Endothelial cell of umbilical vein (primary cell): ENCODE measurements at regions of chr1 and their contacts with region 1.

Region 1: GRCh38 chr1:184242507-184242943 is 144.3 kb upstream of the C1orf21 start:
- DNase-seq: peak; percentile 69
- H3K4me3 ChIP-seq: no peak overlapping the region
- H3K27ac ChIP-seq: no peak overlapping the region
- H3K4me1 ChIP-seq: peaks cover 7% of the 10 kb centered on the region
- H3K27me3 ChIP-seq: peaks cover 19 to 48% of the 10 kb centered on the region in 2 experiments
- CTCF ChIP-seq: no peak
- POLR2A ChIP-seq: no peak

Region 2: DNA sequence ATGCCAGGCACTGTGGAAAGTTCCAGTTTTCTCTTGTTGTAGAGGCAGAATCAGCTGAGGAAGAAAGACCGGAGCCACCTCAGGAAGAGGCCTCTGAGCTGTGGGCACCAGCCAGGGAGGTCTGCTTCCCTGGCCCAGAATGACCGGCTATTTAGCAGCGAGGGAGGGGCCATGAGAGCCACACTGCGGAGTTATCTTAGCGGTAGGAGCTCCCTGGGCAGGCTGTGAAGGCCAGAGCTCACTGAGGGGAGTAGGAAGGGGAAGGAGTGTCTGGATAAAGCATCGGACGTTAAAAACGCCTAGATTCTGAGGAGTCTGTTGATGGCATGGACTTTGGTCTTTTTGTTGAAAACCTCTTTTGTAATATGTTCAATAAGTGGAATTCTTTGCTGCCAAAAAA is 154.5 kb before region 1 on chr1:
- CTCF ChIA-PET with region 1: no interaction called
- POLR2A ChIA-PET with region 1: no interaction called
- dilution Hi-C with region 1: no loop called
- intact Hi-C with region 1: no loop called
- DNase-seq: no peak
- H3K4me3 ChIP-seq: no peak overlapping the region
- H3K27ac ChIP-seq: no peak overlapping the region
- H3K4me1 ChIP-seq: no peaks in the 10 kb centered on the region
- H3K27me3 ChIP-seq: no peaks in the 10 kb centered on the region
- CTCF ChIP-seq: no peak
- POLR2A ChIP-seq: no peak

Region 3: DNA sequence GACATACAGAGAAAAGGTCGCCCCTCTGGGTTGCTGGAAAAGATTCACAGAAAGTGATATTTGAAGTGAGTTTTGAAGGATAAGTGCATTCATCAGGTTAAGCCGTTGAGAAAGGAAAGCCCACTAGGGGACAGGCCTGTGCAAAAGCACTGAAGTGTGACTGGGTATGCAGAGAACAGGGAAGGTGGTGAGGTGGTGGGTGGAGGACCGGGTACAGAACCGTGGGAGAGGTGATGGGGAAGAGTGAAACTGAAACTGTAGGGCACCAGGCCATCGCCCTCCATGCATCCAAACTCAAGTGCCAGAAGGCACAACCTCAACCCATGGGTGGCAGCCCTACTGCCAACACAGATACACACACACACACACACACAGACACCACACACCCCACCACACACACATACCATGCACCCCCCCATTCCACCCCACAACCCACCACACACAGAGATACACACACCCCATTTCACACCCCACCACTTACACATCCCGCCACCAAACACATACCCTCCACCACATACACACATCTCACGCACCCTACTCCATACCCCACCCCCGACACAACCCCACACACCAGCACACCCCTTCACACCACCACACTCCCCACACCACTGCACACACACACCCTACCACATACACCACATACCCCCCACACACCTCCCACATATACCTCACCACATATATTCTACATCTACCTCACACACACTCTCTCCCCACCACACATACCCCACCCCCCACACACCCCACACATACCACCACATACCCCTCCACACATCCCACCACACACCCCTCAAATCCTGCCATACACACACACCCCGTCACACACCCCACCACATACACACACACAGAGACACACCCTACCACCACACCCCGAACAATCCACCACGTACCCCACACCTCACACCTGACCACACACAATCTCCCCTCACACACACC is 132.0 kb before region 1 on chr1:
- CTCF ChIA-PET with region 1: no interaction called
- POLR2A ChIA-PET with region 1: no interaction called
- dilution Hi-C with region 1: no loop called
- intact Hi-C with region 1: no loop called
- DNase-seq: no peak
- H3K4me3 ChIP-seq: no peak overlapping the region
- H3K27ac ChIP-seq: no peak overlapping the region
- H3K4me1 ChIP-seq: no peaks in the 10 kb centered on the region
- H3K27me3 ChIP-seq: no peaks in the 10 kb centered on the region
- CTCF ChIP-seq: no peak
- POLR2A ChIP-seq: no peak

Region 4: DNA sequence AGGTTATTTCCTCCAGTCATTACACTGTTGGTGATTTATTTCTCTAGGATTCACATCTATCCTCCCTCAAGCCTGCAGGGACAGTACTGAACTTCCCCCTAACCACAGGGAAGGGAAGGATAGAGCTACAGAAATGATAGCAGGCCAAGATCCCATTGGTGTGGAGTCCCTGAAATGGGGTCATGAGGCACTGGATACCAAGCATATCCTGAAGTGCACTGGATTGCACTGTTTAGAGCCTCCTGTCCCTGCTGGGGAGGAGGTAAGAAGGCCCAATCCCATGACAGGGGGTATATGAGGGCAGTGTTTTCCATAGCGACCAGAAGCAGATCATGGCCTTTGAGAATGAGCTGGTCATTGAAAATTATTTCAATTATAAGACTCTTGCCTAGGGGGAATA is 201.1 kb after region 1 on chr1:
- CTCF ChIA-PET with region 1: no interaction called
- POLR2A ChIA-PET with region 1: no interaction called
- dilution Hi-C with region 1: no loop called
- intact Hi-C with region 1: no loop called
- DNase-seq: no peak
- H3K4me3 ChIP-seq: no peak overlapping the region
- H3K27ac ChIP-seq: no peak overlapping the region
- H3K4me1 ChIP-seq: no peaks in the 10 kb centered on the region
- H3K27me3 ChIP-seq: no peaks in the 10 kb centered on the region
- CTCF ChIP-seq: no peak
- POLR2A ChIP-seq: no peak

Region 5: GRCh38 chr1:184483101-184483683 is 240.7 kb after region 1 on chr1:
- CTCF ChIA-PET with region 1: no interaction called
- POLR2A ChIA-PET with region 1: no interaction called
- dilution Hi-C with region 1: no loop called
- intact Hi-C with region 1: no loop called
- DNase-seq: peak; percentile 22
- H3K4me3 ChIP-seq: no peak overlapping the region
- H3K27ac ChIP-seq: no peak overlapping the region
- H3K4me1 ChIP-seq: no peaks in the 10 kb centered on the region
- H3K27me3 ChIP-seq: no peaks in the 10 kb centered on the region
- CTCF ChIP-seq: no peak
- POLR2A ChIP-seq: no peak

Region 6: GRCh38 chr1:184563308-184563707 is 320.8 kb after region 1 on chr1:
- CTCF ChIA-PET with region 1: interaction called, 21 read pairs
- POLR2A ChIA-PET with region 1: no interaction called
- dilution Hi-C with region 1: no loop called
- intact Hi-C with region 1: loop called (anchors 5 kb)
- DNase-seq: peak; percentile 62
- H3K4me3 ChIP-seq: no peak overlapping the region
- H3K27ac ChIP-seq: no peak overlapping the region
- H3K4me1 ChIP-seq: no peaks in the 10 kb centered on the region
- H3K27me3 ChIP-seq: peaks cover 0 to 2% of the 10 kb centered on the region in 2 experiments
- CTCF ChIP-seq: peak; percentile 36
- POLR2A ChIP-seq: no peak